ENCODE measurements at regions of chr9 and their contacts with region 1.

Region 1: GRCh38 chr9:132857616-132858342 is 20.3 kb downstream of the AK8 start:
- DNase-seq: no peak
- H3K4me3 ChIP-seq: no peak overlapping the region
- H3K27me3 ChIP-seq: peaks cover 11% of the 10 kb centered on the region
- CTCF ChIP-seq: no peak

Region 2: GRCh38 chr9:132823370-132824145 is 34.2 kb before region 1 on chr9:
- CTCF ChIA-PET with region 1: no interaction called
- POLR2A ChIA-PET with region 1: no interaction called
- DNase-seq: no peak
- H3K4me3 ChIP-seq: no peak overlapping the region
- H3K27me3 ChIP-seq: peaks cover 8% of the 10 kb centered on the region
- CTCF ChIP-seq: no peak

Region 3: GRCh38 chr9:133075925-133076630 is 218.3 kb after region 1 on chr9:
- CTCF ChIA-PET with region 1: no interaction called
- POLR2A ChIA-PET with region 1: interaction called, 10 read pairs
- DNase-seq: peak; percentile 67
- H3K4me3 ChIP-seq: no peak overlapping the region
- H3K27me3 ChIP-seq: 0 out of 2 replicates have a peak, but pooled peaks cover 7% of the 10 kb centered on the region
- CTCF ChIP-seq: no peak

Measured in BJ (cell line).